Caco-2 (cell line): ENCODE measurements at regions of chr5 and their contacts with region 1.

Region 1: GRCh38 chr5:147628058-147628895 is 118.4 kb upstream of the DPYSL3 start:
- DNase-seq: peak; percentile 73 to 85
- H3K4me3 ChIP-seq: no peak overlapping the region
- H3K4me3 Mint-ChIP-seq: no peak overlapping the region
- H3K27ac Mint-ChIP-seq: no peak overlapping the region
- H3K4me1 ChIP-seq: no peaks in the 10 kb centered on the region
- H3K4me1 Mint-ChIP-seq: no peaks in the 10 kb centered on the region
- H3K27me3 ChIP-seq: no peaks in the 10 kb centered on the region; the same call in 1 of the 2 replicates
- H3K27me3 Mint-ChIP-seq: no peaks in the 10 kb centered on the region
- CTCF ChIP-seq: peak; percentile 80 to 85

Region 2: GRCh38 chr5:147675168-147675567 is 46.9 kb after region 1 on chr5:
- CTCF ChIA-PET with region 1: no interaction called
- POLR2A ChIA-PET with region 1: no interaction called
- intact Hi-C with region 1: loop called (anchors 1 kb)
- DNase-seq: peak in 1 of 2 experiments; percentile 65
- H3K4me3 ChIP-seq: no peak overlapping the region
- H3K4me3 Mint-ChIP-seq: no peak overlapping the region
- H3K27ac Mint-ChIP-seq: no peak overlapping the region
- H3K4me1 ChIP-seq: no peaks in the 10 kb centered on the region; the same call in 1 of the 2 replicates
- H3K4me1 Mint-ChIP-seq: no peaks in the 10 kb centered on the region
- H3K27me3 ChIP-seq: no peaks in the 10 kb centered on the region
- H3K27me3 Mint-ChIP-seq: peaks cover 3% of the 10 kb centered on the region
- CTCF ChIP-seq: peak; percentile 66 to 71

Region 3: GRCh38 chr5:147690595-147690994 is 62.3 kb after region 1 on chr5:
- CTCF ChIA-PET with region 1: interaction called, 24 read pairs
- POLR2A ChIA-PET with region 1: no interaction called
- intact Hi-C with region 1: loop called (anchors 1 kb)
- DNase-seq: peak; percentile 60 to 62
- H3K4me3 ChIP-seq: no peak overlapping the region
- H3K4me3 Mint-ChIP-seq: no peak overlapping the region
- H3K27ac Mint-ChIP-seq: no peak overlapping the region
- H3K4me1 ChIP-seq: no peaks in the 10 kb centered on the region
- H3K4me1 Mint-ChIP-seq: no peaks in the 10 kb centered on the region
- H3K27me3 ChIP-seq: no peaks in the 10 kb centered on the region
- H3K27me3 Mint-ChIP-seq: no peaks in the 10 kb centered on the region
- CTCF ChIP-seq: peak; percentile 48 to 55

Region 4: GRCh38 chr5:147822686-147823491 is 194.6 kb after region 1 on chr5:
- CTCF ChIA-PET with region 1: interaction called, 3 read pairs
- POLR2A ChIA-PET with region 1: no interaction called
- intact Hi-C with region 1: loop called (anchors 1 kb)
- DNase-seq: peak in 1 of 2 experiments; percentile 44
- H3K4me3 ChIP-seq: no peak overlapping the region
- H3K4me3 Mint-ChIP-seq: no peak overlapping the region
- H3K27ac Mint-ChIP-seq: no peak overlapping the region
- H3K4me1 ChIP-seq: peaks cover 16% of the 10 kb centered on the region; the same call in 1 of the 2 replicates
- H3K4me1 Mint-ChIP-seq: peaks cover 18% of the 10 kb centered on the region
- H3K27me3 ChIP-seq: no peaks in the 10 kb centered on the region
- H3K27me3 Mint-ChIP-seq: no peaks in the 10 kb centered on the region
- CTCF ChIP-seq: peak; percentile 54 to 61